Right ventricle myocardium inferior (tissue), 1 donor: ENCODE measurements at regions of chr20 and their contacts with region 1.

Region 1: GRCh38 chr20:47272893-47273590 is 83.5 kb downstream of the ZMYND8 start:
- DNase-seq: no peak
- ATAC-seq: peak; percentile 71

Region 2: DNA sequence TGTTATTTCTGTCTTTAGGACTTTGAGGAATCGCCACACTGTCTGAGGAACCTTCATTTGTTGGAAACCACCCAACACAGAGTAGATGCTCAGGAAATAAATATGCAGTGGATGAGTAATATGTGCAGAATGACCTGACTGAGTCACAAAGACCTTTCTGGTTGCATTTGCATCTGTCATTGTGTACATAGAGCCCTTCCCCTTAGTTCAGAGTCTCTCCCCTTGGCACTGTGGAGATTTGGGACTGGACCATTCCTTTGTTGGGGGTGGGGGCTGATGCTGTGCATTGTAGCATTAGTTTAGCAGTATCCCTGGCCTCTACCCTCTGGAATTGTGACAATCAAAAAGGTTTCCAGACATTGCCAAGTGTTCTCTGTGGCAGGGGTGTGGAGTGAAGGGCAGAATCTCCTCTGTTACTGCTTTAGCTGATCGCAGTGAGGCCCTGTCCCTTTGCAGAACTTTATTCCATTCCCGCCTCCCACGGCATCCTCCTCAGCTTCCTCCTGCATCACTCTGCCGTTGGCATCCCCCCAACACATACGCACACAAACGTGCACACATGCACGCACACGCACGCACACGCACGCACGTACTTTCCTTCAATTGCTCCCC is 313.9 kb before region 1 on chr20:
- intact Hi-C with region 1: no loop called
- DNase-seq: no peak
- ATAC-seq: no peak

Region 3: GRCh38 chr20:47205577-47206498 is 67.2 kb before region 1 on chr20:
- intact Hi-C with region 1: loop called (anchors 5 kb)
- DNase-seq: peak; percentile 86
- ATAC-seq: peak; percentile 84

Region 4: DNA sequence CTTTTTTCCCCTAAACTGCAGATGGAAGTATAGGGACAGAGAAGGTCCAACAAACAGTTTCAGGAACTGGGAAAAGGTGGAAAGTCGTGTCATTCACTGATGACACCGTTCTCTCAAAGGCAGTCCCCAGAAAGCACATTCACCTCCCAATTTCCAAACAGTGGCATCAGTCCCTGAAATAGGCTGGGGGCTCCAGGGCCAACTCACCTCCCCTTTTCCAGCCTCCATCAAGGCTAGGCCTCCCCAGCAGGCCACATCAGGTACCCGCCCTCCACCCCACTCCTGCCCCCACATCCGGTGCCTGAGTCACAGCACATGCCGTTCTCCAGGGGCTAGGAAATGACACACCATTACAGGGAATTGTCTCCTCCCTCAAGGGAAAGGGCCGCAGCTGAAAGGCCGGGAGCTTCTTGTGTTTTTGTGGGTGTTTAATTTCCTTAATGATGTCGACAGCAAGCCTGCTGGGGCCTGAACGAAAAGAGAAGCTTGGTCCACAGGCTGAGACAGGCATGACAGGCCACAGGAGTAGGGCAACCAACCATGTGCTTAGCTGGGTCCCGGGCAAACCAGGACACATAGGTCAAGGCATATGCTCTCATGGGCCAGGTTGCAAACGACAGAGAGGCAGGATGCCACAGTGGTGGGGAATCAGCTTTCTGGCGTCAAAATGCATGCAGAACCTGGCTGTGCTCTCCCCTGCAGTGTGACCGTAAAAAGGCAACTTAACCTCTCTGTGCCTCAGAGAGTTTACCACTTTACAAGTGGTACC is 44.3 kb after region 1 on chr20:
- intact Hi-C with region 1: loop called (anchors 5 kb)
- DNase-seq: peak; percentile 85
- ATAC-seq: peak; percentile 63

Region 5: GRCh38 chr20:47360297-47361056 is 87.4 kb after region 1 on chr20:
- intact Hi-C with region 1: loop called (anchors 2 kb)
- DNase-seq: peak; percentile 94
- ATAC-seq: peak; percentile 64

Region 6: DNA sequence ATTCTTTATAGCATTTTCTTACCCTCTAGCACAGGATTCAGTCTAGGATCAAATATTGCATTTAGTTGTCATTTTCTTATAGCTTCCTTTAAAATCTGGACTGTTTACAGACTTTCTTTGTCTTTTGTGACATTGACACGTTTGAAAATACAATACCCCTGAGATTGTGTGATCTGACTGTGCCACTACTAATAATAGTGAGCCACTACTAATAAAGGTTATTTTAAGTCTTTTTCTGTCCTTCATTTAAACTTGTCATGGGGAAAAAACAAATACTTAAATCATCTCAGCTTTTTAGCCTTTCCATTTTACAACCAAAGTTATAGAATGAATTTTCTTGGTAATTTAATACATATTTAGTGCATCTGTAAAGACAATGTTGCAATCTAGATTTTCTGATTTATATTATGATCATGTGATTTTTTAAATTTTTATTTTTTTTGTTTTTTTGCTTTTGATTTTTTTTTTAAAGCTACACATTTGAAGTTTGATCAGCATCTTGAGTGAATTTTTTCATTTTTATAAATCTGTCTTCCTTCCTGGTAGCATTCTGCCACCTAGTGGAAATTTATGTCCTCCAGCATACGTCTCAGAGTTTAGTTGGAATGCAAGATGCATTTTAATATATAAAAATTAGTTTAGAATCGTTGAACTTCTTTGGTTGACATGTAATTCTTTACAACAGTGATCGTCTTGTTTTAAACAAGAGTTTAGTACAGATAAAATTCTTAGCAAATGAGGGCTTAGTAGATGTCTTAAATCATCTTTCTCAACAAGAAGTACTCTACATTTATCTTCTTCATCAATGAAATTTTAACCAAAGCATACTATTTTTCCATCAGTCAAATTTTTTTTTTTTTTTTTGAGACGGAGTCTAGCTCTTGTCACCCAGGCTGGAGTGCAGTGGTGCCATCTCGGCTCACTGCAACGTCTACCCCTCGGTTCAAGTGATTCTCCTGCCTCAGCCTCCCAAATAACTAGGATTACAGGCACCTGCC is 348.1 kb after region 1 on chr20:
- intact Hi-C with region 1: loop called (anchors 2 kb)
- DNase-seq: no peak
- ATAC-seq: no peak